Activated naive CD4-positive, alpha-beta T cell treated with anti-CD3 and anti-CD28 coated beads for 36 hours (primary cell): ENCODE measurements at regions of chr2 and their contacts with region 1.

Region 1: GRCh38 chr2:189302274-189302948 is 122.8 kb upstream of the COL5A2 start:
- DNase-seq: peak; percentile 41
- H3K4me3 Mint-ChIP-seq: peak overlapping the region; percentile 7
- H3K27ac Mint-ChIP-seq: peak overlapping the region; percentile 91
- H3K4me1 Mint-ChIP-seq: peaks cover 79% of the 10 kb centered on the region
- H3K27me3 Mint-ChIP-seq: no peaks in the 10 kb centered on the region

Region 2: DNA sequence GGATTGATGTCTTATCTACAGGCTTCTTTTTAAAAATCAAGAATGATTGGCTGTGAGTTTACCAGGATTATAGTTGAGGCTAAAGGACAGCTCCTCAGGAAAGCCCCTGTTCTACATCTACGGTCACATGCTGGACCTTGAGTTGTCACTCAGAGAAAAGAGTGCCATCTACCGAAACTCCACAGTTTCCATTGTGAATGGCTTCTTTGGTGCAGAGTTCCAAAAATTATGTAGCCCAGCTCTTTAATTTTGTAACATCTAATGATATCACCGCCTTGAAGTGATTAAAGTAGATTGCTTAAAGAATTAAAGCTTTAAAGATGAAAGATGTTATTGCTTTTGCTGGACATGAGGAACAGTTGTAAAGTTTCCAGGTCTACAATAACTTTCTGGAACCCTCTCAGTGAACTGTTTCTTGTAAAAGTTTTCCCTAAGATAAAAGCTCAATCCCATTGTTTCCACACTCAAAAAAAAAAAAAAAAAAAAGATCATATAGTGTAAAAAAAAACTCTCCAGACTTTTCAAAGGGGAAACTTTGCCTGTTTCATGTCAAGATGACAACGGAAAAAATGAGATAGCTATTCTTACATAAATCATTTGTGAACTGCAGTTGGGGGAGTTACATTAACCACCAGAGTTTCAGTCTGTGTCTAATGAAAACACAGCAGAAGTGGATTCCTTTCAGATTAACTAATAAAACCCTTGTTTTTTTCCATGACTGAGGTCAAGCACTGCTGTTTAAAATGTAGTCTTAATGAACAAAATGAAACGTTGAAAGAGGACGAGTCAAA is 323.9 kb before region 1 on chr2:
- CTCF ChIA-PET with region 1: no interaction called
- intact Hi-C with region 1: loop called (anchors 5 kb)
- DNase-seq: peak; percentile 6
- H3K4me3 Mint-ChIP-seq: peak overlapping the region; percentile 7
- H3K27ac Mint-ChIP-seq: peak overlapping the region; percentile 51
- H3K4me1 Mint-ChIP-seq: peaks cover 19% of the 10 kb centered on the region
- H3K27me3 Mint-ChIP-seq: peaks cover 19% of the 10 kb centered on the region

Region 3: GRCh38 chr2:189318761-189319160 is 16.4 kb after region 1 on chr2:
- CTCF ChIA-PET with region 1: no interaction called
- intact Hi-C with region 1: no loop called
- DNase-seq: no peak
- H3K4me3 Mint-ChIP-seq: no peak overlapping the region
- H3K27ac Mint-ChIP-seq: no peak overlapping the region
- H3K4me1 Mint-ChIP-seq: peaks cover 16% of the 10 kb centered on the region
- H3K27me3 Mint-ChIP-seq: no peaks in the 10 kb centered on the region

Region 4: DNA sequence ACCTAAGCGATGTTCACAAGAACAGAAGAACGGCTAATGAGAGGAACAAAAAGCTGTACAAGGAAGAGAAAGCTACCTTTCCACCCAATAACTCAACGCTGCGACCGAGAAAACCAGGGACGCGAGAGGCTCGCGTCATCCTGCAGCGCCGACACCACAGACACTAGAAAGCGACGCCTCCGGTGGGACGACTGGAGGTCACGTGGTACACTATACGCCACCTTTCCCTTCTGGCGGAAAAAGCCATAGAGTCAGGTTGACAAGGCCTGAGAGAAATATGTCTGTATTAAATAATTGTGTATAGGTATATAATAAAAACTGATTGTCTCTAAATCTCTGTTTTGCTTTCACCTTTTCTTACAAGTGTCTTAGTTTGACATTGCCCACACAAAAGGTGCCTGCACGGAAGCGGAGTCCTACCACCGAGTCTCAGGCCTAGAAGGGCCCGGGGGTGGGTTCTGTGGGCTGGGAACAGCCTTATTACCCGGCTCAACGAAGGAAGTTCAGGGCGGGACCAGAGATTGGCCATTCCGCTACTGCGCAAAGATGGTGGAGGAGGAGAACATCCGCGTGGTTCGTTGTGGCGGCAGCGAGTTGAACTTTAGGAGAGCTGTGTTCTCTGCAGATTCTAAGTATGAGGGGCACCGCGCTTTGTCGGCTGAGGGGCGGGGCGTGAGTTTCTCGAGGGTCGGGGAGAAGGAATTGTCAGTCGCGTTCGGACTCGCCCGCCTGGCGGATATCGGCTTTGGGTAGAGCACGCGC is 138.7 kb after region 1 on chr2 and contains the start of gene WDR75:
- CTCF ChIA-PET with region 1: no interaction called
- intact Hi-C with region 1: loop called (anchors 1 kb)
- DNase-seq: peak; percentile 95
- H3K4me3 Mint-ChIP-seq: no peak within 1 kb of the TSS
- H3K27ac Mint-ChIP-seq: peak within 1 kb of the TSS; percentile 97
- H3K4me1 Mint-ChIP-seq: peaks cover 12% of the 10 kb centered on the region
- H3K27me3 Mint-ChIP-seq: no peaks in the 10 kb centered on the region
- total RNA-seq, gene WDR75: 69.7 to 72.7 TPM

Region 5: GRCh38 chr2:189641590-189641989 is 339.2 kb after region 1 on chr2:
- CTCF ChIA-PET with region 1: no interaction called
- intact Hi-C with region 1: loop called (anchors 1 kb)
- DNase-seq: peak; percentile 71
- H3K4me3 Mint-ChIP-seq: no peak overlapping the region
- H3K27ac Mint-ChIP-seq: peak overlapping the region; percentile 10
- H3K4me1 Mint-ChIP-seq: peaks cover 25% of the 10 kb centered on the region
- H3K27me3 Mint-ChIP-seq: no peaks in the 10 kb centered on the region

Region 6: GRCh38 chr2:190319555-190320498 is 1017.4 kb after region 1 on chr2 and contains the start of gene HIBCH:
- CTCF ChIA-PET with region 1: no interaction called
- intact Hi-C with region 1: loop called (anchors 10 kb)
- DNase-seq: peak; percentile 94
- H3K4me3 Mint-ChIP-seq: peak within 1 kb of the TSS; percentile 91
- H3K27ac Mint-ChIP-seq: peak within 1 kb of the TSS; percentile 88
- H3K4me1 Mint-ChIP-seq: peaks cover 39% of the 10 kb centered on the region
- H3K27me3 Mint-ChIP-seq: no peaks in the 10 kb centered on the region
- total RNA-seq, gene HIBCH: 19.2 TPM